Lower leg skin (tissue), 4 donors: ENCODE measurements at regions of chr3 and their contacts with region 1.

Region 1: DNA sequence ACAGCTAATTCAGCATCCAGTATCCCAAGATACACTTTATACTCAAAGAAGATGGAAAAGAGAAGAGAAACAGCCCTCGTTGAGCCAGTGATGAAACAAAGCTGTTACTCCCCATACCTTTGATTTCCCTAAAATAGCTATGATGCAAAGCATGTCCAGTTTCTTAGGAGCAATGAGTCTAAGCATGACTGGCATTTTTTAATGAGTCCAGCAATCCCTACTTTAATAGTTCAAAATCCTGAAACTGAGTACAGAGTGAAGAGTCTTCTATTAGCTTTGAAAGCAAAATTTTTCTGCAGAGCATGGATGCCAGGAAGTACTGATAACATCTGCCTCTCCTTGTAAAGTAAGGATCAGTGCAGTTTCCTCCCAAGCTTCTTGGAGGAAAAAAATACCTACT is 302.7 kb downstream of the IL5RA start:
- DNase-seq: no peak
- H3K4me3 ChIP-seq: no peak overlapping the region
- CTCF ChIP-seq: no peak
- POLR2A ChIP-seq: no peak

Region 2: GRCh38 chr3:2360815-2361214 is 446.7 kb before region 1 on chr3:
- intact Hi-C with region 1: no loop called
- DNase-seq: no peak
- H3K4me3 ChIP-seq: no peak overlapping the region
- CTCF ChIP-seq: no peak
- POLR2A ChIP-seq: no peak

Region 3: DNA sequence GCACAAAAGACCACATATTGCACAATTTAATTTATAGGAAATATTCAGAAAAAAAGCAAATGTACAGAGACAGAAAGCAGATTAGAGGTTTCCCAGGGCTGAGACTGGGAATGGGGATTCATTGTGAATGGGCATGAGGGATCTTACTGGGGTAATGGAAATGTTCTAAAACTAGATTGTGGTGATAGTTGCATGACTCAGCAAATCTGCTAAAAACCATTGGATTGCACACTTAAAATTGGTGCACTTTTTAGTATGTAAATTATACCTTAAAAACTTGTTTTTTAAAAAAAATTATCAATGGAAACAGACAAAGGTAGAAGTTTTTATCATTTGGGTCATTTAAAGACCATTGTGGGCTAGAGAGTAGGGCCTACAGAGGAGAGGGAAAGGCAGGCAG is 72.1 kb after region 1 on chr3:
- intact Hi-C with region 1: loop called (anchors 2 kb)
- DNase-seq: no peak
- H3K4me3 ChIP-seq: no peak overlapping the region
- CTCF ChIP-seq: no peak
- POLR2A ChIP-seq: no peak

Region 4: GRCh38 chr3:3082234-3082924 is 274.9 kb after region 1 on chr3:
- intact Hi-C with region 1: no loop called
- DNase-seq: no peak
- H3K4me3 ChIP-seq: no peak overlapping the region
- CTCF ChIP-seq: no peak
- POLR2A ChIP-seq: no peak